Activated T-helper 1 cell treated with anti-CD3 and anti-CD28 coated beads, Interleukin-12 subunit alpha, Interleukin-12 subunit beta, Interleukin-2, Interleukin-4 antibody, amounts not matched to agents 30 ng/mL and 10 ng/mL and 1 ng/mL, durations not matched to agents 14 hours and 24 hours and 36 hours (primary cell): ENCODE measurements at regions of chr14 and their contacts with region 1.

Region 1: DNA sequence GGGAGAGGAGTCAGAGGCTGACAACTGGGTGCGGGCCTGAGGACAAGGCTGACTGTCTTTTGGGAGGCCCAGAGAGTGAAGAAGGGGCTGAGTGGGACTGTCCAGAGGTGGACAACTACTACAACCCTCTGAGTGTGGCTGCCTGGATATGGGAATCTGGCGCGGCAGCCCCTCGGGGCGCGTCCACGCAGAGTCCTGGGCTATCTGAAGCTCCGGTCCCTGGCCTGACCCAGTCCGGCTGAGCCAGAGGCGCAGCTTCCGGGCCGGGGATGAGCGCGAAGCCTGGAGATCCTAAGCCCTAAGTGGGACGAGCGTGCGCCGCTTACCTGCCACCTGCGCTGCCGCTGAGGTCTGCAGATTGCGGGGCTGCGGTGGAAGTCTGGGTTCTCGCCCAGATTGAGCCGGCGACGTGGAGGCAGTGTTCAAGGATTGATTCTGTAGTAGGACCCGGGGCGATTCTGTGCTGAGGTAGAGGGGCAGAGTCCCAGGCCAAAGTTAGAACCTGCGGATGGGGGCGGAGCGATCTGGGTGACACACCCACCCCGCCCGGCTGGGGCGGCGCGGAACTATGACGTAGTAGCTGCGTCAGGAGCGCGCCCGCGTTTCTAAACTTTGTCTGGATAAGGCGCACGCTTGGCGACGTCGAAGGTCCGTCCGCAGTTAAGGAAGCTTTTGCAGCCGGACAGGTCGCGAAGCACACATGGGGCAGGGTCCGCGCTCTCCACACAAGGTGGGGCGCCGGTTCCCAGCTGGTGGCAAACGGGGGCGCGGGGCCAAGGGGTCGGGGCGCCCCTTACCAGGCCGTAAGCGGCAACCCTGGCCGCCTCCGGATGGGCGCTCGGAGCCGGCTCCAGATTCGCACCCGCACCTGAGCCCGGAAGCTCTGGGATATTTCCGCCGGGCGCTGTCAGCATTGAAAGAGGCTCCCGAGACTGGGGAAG is at the starts of genes DHRS1 and NOP9:
- DNase-seq: peak; percentile 90
- H3K4me3 Mint-ChIP-seq: peak within 1 kb of the TSS; percentile 94
- H3K27ac Mint-ChIP-seq: peak within 1 kb of the TSS; percentile 96
- H3K4me1 Mint-ChIP-seq: peaks cover 44% of the 10 kb centered on the region
- H3K27me3 Mint-ChIP-seq: no peaks in the 10 kb centered on the region
- total RNA-seq, gene DHRS1: 7.5 TPM in 2 replicates
- total RNA-seq, gene NOP9: 49.3 and 52.6 TPM in 2 replicates

Region 2: GRCh38 chr14:24141097-24141880 is 158.2 kb before region 1 on chr14 and contains the start of gene EMC9:
- intact Hi-C with region 1: loop called (anchors 1 kb)
- DNase-seq: peak; percentile 100
- H3K4me3 Mint-ChIP-seq: peak within 1 kb of the TSS; percentile 98
- H3K27ac Mint-ChIP-seq: peak within 1 kb of the TSS; percentile 92
- H3K4me1 Mint-ChIP-seq: peaks cover 80% of the 10 kb centered on the region
- H3K27me3 Mint-ChIP-seq: no peaks in the 10 kb centered on the region
- total RNA-seq, gene EMC9: 22.9 and 28.3 TPM in 2 replicates

Region 3: DNA sequence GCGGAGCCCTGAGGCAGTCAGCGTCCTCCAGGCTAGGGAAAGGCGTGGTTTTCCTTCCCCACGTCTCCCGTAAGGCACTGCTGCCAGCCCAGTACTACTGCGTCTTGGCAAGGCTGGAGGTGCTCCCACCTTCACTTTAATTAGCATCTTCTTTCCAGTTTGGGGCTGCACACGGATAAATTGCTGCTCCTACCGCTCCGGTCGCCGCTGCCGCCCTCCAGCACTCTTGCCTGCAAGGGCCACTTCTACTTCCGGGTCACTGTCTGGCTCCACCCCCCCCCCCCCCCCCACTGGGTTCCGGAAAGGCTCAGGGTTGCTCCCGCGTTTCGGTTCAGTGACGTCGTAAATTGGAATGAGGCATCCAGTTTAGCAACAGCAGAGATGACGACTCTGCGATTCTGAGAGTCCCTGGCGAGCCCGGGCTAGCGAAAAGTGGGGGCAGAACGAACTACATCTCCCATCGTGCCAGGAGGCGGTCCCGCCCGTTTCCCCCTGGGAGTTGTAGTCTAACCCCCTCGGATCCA is 67.3 kb before region 1 on chr14 and contains the start of gene NEDD8:
- intact Hi-C with region 1: loop called (anchors 1 kb)
- DNase-seq: peak; percentile 84
- H3K4me3 Mint-ChIP-seq: peak within 1 kb of the TSS; percentile 93
- H3K27ac Mint-ChIP-seq: peak within 1 kb of the TSS; percentile 91
- H3K4me1 Mint-ChIP-seq: peaks cover 50% of the 10 kb centered on the region
- H3K27me3 Mint-ChIP-seq: no peaks in the 10 kb centered on the region
- total RNA-seq, gene NEDD8: 177 and 185 TPM in 2 replicates

Region 4: GRCh38 chr14:24279301-24280186 is 20.0 kb before region 1 on chr14:
- intact Hi-C with region 1: loop called (anchors 1 kb)
- DNase-seq: peak; percentile 30
- H3K4me3 Mint-ChIP-seq: no peak overlapping the region
- H3K27ac Mint-ChIP-seq: peak overlapping the region; percentile 72
- H3K4me1 Mint-ChIP-seq: peaks cover 35% of the 10 kb centered on the region
- H3K27me3 Mint-ChIP-seq: peaks cover 5% of the 10 kb centered on the region